Adrenal gland (tissue), 19 donors: ENCODE measurements at regions of chr4 and their contacts with region 1.

Region 1: GRCh38 chr4:22607382-22607781 is 85.4 kb upstream of the GBA3 start:
- DNase-seq: peak; percentile 41 to 75 (median 62)
- H3K4me3 ChIP-seq: no peak overlapping the region
- H3K27ac ChIP-seq: no peak overlapping the region
- H3K4me1 ChIP-seq: no peaks in the 10 kb centered on the region
- H3K27me3 ChIP-seq: no peaks in the 10 kb centered on the region
- CTCF ChIP-seq: peak; percentile 49 to 75 (median 54)
- POLR2A ChIP-seq: no peak

Region 2: DNA sequence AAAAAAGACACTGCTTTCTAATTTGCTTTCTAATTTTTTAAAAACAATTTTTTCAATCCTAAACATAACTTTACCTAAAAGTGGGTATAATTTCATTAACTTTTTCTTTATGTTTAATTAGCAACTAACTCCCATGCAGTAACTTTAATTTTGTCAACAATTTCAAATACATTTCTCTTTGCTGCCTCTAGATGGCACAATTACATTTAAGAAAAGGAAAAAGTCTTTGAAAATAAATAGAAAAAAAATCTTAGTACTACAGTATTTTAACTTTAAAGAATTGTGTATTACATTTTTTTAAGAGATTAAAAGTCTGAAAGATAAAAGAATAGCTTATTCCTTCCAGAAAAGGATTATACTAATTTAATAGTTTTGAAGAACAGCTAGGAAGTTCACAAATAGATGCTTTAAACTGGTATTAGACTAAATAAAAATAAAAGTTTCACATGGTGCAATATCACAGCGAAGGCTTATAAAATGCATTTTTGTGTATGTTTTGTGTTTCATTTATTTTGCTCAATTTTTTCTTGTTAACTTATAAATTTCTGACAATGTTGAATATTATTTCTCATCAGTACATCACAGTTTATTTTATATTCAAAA is 196.6 kb before region 1 on chr4:
- intact Hi-C with region 1: loop called (anchors 5 kb)
- DNase-seq: no peak
- H3K4me3 ChIP-seq: no peak overlapping the region
- H3K27ac ChIP-seq: no peak overlapping the region
- H3K4me1 ChIP-seq: no peaks in the 10 kb centered on the region
- H3K27me3 ChIP-seq: no peaks in the 10 kb centered on the region
- CTCF ChIP-seq: peak; percentile 32 to 76 (median 54)
- POLR2A ChIP-seq: no peak

Region 3: GRCh38 chr4:22515145-22515887 is 92.1 kb before region 1 on chr4:
- intact Hi-C with region 1: loop called in 1 of 2 experiments (anchors 10 kb)
- DNase-seq: peak; percentile 68 to 82 (median 76)
- H3K4me3 ChIP-seq: peak overlapping the region in 3 of 4 donors; percentile 40 to 72 (median 67)
- H3K27ac ChIP-seq: peak overlapping the region in 4 of 5 donors; percentile 22 to 93 (median 84)
- H3K4me1 ChIP-seq: peaks cover 0 to 16% of the 10 kb centered on the region in 2 donors
- H3K27me3 ChIP-seq: no peaks in the 10 kb centered on the region
- CTCF ChIP-seq: peak in 1 of 6 experiments; percentile 15
- POLR2A ChIP-seq: peak in 1 of 2 donors; percentile 48